ENCODE measurements at regions of chr19 and their contacts with region 1.

Region 1: GRCh38 chr19:4139614-4140236 is 13.7 kb upstream of the CREB3L3 start:
- DNase-seq: peak; percentile 93

Region 2: GRCh38 chr19:4199699-4200293 is 60.1 kb after region 1 on chr19:
- intact Hi-C with region 1: loop called in 1 of 2 experiments (anchors 5 kb)
- DNase-seq: no peak

Measured in posterior vena cava (tissue), 2 donors.